Esophagus muscularis mucosa (tissue), 4 donors: ENCODE measurements at regions of chr14 and their contacts with region 1.

Region 1: DNA sequence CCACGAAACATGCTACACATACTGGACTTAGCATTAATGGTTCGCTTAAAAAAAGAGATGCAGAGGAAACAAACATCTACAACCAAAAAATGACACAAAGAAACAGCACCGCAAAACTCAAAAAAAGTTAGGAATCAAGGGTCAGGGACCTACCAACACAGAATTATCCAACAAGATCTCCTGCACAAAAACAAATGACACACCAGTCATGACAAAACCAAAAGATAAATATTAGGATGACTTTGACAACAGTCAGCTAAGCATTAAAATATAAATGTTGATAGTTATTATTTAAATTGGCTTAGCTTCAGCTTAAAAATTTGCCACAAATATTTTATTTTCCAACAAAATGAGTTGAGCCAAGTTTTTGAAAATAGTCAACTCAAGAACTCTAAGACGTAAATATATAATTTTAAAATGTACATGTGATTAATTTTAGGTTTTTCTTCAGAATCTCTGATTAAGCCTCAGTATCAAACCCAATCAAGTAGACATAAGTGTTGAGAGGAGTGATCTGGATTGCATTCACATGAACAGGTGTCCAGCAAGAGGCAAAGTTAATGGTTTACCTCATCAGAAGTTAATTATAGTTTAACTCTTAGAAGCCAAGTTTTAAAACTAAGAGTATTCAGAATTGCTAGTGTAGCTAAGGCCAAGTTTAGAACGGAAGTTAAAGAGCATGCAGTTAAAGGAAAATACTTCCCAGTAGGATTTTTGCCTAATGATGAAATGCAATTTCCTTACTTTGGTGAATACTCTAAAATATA is 79.9 kb downstream of the HEATR5A start:
- DNase-seq: no peak
- H3K4me3 ChIP-seq: no peak overlapping the region
- H3K27ac ChIP-seq: no peak overlapping the region
- H3K4me1 ChIP-seq: peaks cover 0 to 15% (median 10%) of the 10 kb centered on the region in 4 donors
- H3K27me3 ChIP-seq: no peaks in the 10 kb centered on the region
- CTCF ChIP-seq: no peak
- EP300 ChIP-seq: no peak
- POLR2A ChIP-seq: no peak

Region 2: GRCh38 chr14:31142455-31143087 is 197.9 kb before region 1 on chr14:
- intact Hi-C with region 1: loop called (anchors 10 kb)
- DNase-seq: no peak
- H3K4me3 ChIP-seq: no peak overlapping the region
- H3K27ac ChIP-seq: no peak overlapping the region
- H3K4me1 ChIP-seq: peaks cover 0 to 8% (median under 1%) of the 10 kb centered on the region in 4 donors
- H3K27me3 ChIP-seq: no peaks in the 10 kb centered on the region
- CTCF ChIP-seq: no peak
- EP300 ChIP-seq: no peak
- POLR2A ChIP-seq: no peak